Dorsolateral prefrontal cortex (tissue), 120 donors: ENCODE measurements at regions of chr19 and their contacts with region 1.

Region 1: GRCh38 chr19:34041925-34042521 is 130.3 kb upstream of the LSM14A start:
- DNase-seq: peak; percentile 46 to 81 (median 65)
- H3K4me3 ChIP-seq: no peak overlapping the region
- H3K27ac ChIP-seq: no peak overlapping the region
- H3K27me3 ChIP-seq: peaks cover 0 to 14% (median 0%) of the 10 kb centered on the region in 45 donors
- CTCF ChIP-seq: peak; percentile 52 to 94 (median 86)

Region 2: DNA sequence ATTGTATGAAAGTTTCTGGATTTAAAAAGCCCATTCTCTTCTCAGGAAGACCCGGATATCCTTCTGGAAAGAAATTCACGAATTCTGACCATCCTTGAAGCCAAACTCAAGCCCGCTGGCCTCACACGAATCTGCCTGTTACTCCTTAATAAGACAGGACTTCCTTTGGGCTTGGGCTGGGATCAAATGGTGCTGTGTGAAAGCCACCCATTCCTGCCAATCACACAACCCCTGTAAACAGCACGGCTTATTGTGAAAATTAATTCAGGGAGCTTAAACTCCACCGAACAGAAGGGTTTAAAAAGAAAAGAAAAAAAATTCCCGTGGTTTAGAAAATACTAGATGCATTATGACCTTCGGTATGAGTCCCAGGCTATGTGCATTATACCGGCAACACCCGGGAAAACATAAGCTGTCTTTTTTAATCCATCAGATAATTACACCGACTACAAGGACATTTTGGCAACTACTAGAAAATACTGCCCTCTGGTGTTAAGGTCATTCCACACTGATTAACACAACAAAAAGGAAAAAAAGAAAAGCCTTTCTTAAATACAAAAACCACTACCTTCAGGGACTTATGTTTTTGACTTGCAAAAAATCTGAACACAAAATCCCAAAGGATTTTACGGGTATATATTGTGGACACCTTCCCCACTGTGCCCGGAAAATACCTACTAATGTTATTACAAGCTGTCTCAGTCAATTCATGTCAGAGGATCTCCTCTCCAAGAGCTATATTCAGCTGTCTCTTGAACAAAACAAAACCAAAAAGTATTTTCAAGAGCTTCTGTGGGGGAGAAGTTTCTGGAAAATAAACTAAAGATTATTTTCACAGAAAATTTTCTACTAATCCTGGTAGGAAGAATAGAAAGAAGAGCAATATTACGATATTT is 54.2 kb after region 1 on chr19:
- intact Hi-C with region 1: loop called in 1 of 2 experiments (anchors 2 kb)
- DNase-seq: peak in 2 of 10 donors; percentile 15 to 36
- H3K4me3 ChIP-seq: peak overlapping the region in 43 of 59 donors; percentile 3 to 52 (median 33)
- H3K27ac ChIP-seq: no peak overlapping the region
- H3K27me3 ChIP-seq: no peaks in the 10 kb centered on the region
- CTCF ChIP-seq: peak; percentile 50 to 88 (median 70)

Region 3: GRCh38 chr19:34145741-34146202 is 103.7 kb after region 1 on chr19:
- intact Hi-C with region 1: loop called in 1 of 2 experiments (anchors 5 kb)
- DNase-seq: peak in 5 of 10 donors; percentile 25 to 57 (median 42)
- H3K4me3 ChIP-seq: no peak overlapping the region
- H3K27ac ChIP-seq: no peak overlapping the region
- H3K27me3 ChIP-seq: no peaks in the 10 kb centered on the region
- CTCF ChIP-seq: peak; percentile 63 to 93 (median 80)

Region 4: DNA sequence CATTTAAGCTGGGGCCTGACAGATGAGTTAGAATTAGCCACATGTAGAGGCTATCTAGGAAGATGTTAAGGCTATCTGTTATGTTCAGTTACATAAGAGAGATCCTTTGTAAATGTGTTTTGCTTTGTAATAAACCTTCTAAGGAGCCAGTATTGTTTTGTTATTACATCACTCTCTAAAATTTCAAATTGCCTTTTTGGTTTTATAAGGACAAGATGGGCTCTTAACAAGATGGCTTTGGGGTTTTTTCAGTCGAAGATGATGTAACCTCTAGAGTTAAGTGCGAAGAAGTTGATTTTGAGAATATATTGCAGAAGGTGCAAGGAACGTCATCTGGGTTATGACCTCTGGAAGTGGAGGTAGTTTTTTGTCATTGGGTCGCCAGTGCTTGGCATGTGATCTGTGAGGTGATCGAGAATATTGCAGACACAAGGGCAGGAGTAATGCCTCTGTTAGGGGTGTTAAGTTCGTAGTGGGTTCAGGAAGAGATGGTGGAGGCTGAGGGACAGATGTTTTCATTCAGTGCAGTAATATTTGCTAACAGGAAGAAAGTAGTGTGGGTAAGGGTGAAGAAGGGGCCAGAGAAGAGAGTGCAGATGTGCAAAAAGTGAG is 143.0 kb after region 1 on chr19:
- intact Hi-C with region 1: no loop called
- DNase-seq: no peak
- H3K4me3 ChIP-seq: peak overlapping the region in 1 of 59 donors; percentile 3
- H3K27ac ChIP-seq: peak overlapping the region in 15 of 59 donors; percentile 0 to 50 (median 21)
- H3K27me3 ChIP-seq: no peaks in the 10 kb centered on the region
- CTCF ChIP-seq: no peak